Cardiac septum (tissue), 1 donor: ENCODE measurements at regions of chr17 and their contacts with region 1.

Region 1: DNA sequence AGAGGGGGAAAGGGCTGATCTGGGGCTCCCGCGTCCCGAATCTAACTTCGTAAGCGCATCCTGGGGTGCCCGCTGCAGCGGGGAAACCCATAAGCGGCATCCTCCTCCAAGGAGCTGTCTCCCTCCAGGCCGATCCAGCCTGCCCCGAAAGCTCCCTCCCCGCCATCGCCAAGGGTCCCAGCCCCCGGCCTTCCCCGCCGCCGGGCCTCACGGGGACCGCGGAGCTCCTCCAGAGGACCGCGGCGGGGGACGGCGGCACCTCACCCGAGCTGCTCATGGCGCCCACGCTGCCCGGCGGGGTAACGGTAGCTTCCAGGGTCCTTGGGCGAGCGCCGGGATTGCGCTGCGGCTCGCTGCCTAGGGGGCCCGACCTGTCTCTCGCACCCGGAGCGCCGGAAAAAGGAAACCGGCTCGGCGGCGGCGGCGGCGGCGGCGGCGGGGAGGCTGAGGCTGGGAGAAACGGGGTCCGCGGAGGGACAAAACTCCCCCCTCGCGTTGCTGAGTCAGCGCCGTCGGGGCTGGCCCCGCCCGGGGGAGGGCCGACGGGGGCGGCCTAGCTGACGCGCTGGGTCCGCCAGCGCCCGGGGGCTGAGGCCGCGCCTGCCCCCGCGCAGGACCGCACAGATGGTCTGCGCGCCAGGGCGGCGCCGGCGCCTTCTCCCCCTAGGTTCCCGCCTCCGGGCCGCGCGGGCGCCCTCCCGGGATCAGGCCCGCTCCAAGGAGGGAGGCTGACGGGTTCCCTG is at the start of gene BLMH:
- DNase-seq: peak; percentile 89
- total RNA-seq, gene BLMH: 14.1 TPM

Region 2: GRCh38 chr17:30116661-30117551 is 174.8 kb before region 1 on chr17 and contains the start of gene NSRP1:
- intact Hi-C with region 1: loop called (anchors 5 kb)
- DNase-seq: peak; percentile 98
- total RNA-seq, gene NSRP1: 35.7 TPM

Region 3: DNA sequence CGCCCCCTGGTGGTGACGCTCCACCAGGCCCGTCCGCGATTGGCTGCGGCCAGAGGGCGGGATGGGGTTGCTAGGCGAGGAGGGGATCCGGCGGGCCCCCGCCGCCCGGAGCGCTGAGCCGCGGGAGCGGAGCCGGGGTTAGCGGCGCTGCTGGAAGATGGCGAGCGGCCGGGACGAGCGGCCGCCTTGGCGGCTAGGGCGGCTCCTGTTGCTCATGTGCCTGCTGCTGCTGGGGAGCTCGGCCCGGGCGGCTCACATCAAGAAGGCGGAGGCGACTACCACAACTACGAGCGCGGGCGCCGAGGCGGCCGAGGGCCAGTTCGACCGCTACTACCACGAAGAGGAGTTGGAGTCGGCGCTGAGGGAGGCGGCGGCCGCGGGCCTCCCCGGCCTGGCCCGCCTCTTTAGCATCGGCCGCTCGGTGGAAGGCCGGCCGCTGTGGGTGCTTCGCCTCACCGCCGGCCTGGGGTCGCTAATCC is 87.1 kb after region 1 on chr17 and contains the start of gene CPD:
- intact Hi-C with region 1: loop called (anchors 5 kb)
- DNase-seq: peak; percentile 99
- total RNA-seq, gene CPD: 20.7 TPM

Region 4: DNA sequence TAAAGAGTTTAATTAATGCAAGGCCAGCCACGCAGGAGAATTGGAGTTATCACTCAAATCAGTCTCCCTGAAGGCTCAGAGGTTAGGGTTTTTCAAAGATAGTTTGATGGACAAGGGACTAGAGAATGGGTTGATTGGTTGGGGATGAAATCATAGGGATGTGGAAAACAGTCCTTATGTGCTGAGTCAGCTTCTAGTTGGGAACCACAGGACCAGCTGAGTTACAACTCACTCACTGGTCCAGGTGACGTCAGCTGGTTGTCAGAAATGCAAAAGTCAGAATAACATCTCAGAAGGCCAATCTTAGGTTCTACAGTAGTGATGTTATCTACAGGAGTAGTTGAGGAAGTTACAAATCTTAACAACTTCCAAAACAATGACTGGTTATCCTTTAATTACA is 134.6 kb after region 1 on chr17:
- intact Hi-C with region 1: no loop called
- DNase-seq: no peak